WTC11 (cell line): ENCODE measurements at regions of chr11 and their contacts with region 1.

Region 1: DNA sequence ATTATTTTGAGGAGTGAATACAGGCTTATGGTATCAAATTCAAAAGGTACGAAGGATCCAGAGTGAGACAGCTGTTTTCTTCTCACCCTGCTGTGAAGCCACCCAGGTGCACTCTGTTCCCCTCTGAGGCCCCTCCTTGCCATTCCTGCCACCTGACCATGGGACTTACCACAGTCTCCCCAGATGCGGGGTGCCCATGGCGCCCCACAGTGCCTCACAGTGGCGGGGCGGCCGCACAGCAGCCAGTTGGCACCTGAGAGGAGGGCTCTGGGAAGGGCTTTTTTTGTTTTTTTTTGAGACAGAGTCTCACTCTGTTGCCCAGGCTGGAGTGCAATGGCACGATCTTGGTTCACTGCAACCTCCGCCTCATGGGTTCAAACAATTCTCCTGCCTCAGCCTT is 151.7 kb downstream of the CEP164 start:
- DNase-seq: peak; percentile 63
- ATAC-seq: peak; percentile 83
- H3K4me3 Mint-ChIP-seq: no peak overlapping the region
- H3K27ac Mint-ChIP-seq: no peak overlapping the region
- H3K4me1 Mint-ChIP-seq: peaks cover 28% of the 10 kb centered on the region
- H3K27me3 Mint-ChIP-seq: peaks cover 2% of the 10 kb centered on the region
- CTCF ChIP-seq: no peak

Region 2: GRCh38 chr11:117410861-117411710 is 68.3 kb before region 1 on chr11:
- CTCF ChIA-PET with region 1: no interaction called
- POLR2A ChIA-PET with region 1: no interaction called
- DNase-seq: no peak
- ATAC-seq: peak; percentile 55; the same call in 1 of the 2 replicates
- H3K4me3 Mint-ChIP-seq: no peak overlapping the region
- H3K27ac Mint-ChIP-seq: no peak overlapping the region
- H3K4me1 Mint-ChIP-seq: peaks cover 17% of the 10 kb centered on the region
- H3K27me3 Mint-ChIP-seq: 0 out of 2 replicates have a peak, but pooled peaks cover 2% of the 10 kb centered on the region
- CTCF ChIP-seq: no peak

Region 3: DNA sequence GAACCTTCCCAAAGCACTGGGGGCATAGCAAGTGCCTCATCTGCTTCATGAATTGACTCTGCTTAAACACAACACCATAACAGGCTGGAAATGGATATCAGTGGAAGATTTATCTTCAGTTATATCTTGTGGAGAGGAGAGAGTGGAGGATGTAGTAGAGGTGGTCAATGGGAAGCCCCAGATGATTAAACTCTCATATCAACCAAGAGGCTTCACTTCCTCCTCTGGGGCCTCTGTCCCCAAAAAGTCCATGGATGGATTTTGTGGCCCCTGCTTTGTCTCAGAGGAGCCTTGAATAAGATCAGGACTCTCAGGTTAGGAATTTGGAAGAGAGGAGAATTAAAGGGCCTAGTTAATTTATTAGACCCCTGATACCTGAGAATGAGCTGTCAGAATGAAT is 45.7 kb before region 1 on chr11:
- CTCF ChIA-PET with region 1: no interaction called
- POLR2A ChIA-PET with region 1: no interaction called
- DNase-seq: no peak
- ATAC-seq: no peak
- H3K4me3 Mint-ChIP-seq: no peak overlapping the region
- H3K27ac Mint-ChIP-seq: no peak overlapping the region
- H3K4me1 Mint-ChIP-seq: peaks cover 16% of the 10 kb centered on the region
- H3K27me3 Mint-ChIP-seq: no peaks in the 10 kb centered on the region
- CTCF ChIP-seq: no peak

Region 4: GRCh38 chr11:117468888-117469287 is 10.5 kb before region 1 on chr11:
- CTCF ChIA-PET with region 1: interaction called, 10 read pairs
- POLR2A ChIA-PET with region 1: no interaction called
- DNase-seq: peak; percentile 33
- ATAC-seq: peak; percentile 79
- H3K4me3 Mint-ChIP-seq: no peak overlapping the region
- H3K27ac Mint-ChIP-seq: no peak overlapping the region
- H3K4me1 Mint-ChIP-seq: peaks cover 20% of the 10 kb centered on the region
- H3K27me3 Mint-ChIP-seq: no peaks in the 10 kb centered on the region; the same call in 1 of the 2 replicates
- CTCF ChIP-seq: no peak